Activated T-helper 1 cell treated with anti-CD3 and anti-CD28 coated beads, Interleukin-12 subunit alpha, Interleukin-12 subunit beta, Interleukin-2, Interleukin-4 antibody, amounts not matched to agents 30 ng/mL and 10 ng/mL and 1 ng/mL, durations not matched to agents 14 hours and 24 hours and 36 hours (primary cell): ENCODE measurements at regions of chr7 and their contacts with region 1.

Region 1: GRCh38 chr7:33062782-33063443 is 337 bp upstream of the NT5C3A start:
- DNase-seq: peak; percentile 88
- H3K4me3 Mint-ChIP-seq: peak overlapping the region; percentile 97
- H3K27ac Mint-ChIP-seq: peak overlapping the region; percentile 96
- H3K4me1 Mint-ChIP-seq: peaks cover 38% of the 10 kb centered on the region
- H3K27me3 Mint-ChIP-seq: peaks cover 9% of the 10 kb centered on the region

Region 2: DNA sequence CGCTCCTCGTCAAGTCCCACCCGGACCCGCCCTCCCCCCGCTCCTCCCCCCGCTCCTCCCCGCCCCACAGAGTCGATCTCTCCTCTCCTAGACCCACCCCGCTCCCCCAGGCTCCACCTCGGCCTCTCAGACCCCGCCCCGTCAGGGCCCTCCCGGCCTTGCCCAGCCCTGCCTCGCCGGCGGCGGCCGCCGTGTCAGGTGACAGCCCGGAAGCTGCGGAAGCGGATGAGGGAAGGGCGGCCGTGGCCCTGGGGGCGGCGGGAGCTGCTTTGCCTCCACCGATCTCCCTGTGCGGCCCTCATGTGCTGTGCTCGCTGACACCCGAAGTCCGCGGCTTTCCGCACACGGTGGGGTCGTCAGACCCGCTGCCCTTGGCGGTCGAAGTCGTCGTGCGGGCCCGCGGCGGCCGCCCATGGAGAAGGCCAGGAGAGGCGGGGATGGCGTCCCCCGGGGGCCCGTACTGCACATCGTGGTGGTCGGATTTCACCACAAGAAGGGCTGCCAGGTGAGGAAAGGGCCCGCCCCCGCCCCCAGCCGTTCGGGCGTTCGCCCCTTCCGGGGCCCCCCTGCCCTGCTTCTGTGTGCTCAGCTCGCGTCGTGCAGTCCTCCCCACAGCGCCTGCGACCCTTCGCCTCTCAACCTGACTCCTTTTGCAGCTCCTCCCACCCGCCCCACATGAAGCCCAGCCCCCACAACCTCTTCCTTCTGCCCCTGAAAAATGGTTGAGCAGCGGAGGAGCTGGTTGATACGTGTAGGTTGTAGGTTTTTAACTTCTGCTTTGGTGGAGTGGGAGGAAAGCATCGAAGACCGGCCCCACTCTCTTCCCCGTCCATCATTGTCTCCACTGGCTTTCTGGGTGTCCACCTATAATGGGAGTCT is 567.4 kb before region 1 on chr7 and contains the start of gene AVL9:
- intact Hi-C with region 1: loop called (anchors 1 kb)
- DNase-seq: peak; percentile 99
- H3K4me3 Mint-ChIP-seq: peak within 1 kb of the TSS; percentile 93
- H3K27ac Mint-ChIP-seq: peak within 1 kb of the TSS; percentile 98
- H3K4me1 Mint-ChIP-seq: peaks cover 32% of the 10 kb centered on the region
- H3K27me3 Mint-ChIP-seq: no peaks in the 10 kb centered on the region
- total RNA-seq, gene AVL9: 46.7 and 50.6 TPM in 2 replicates

Region 3: GRCh38 chr7:32905175-32905662 is 157.7 kb before region 1 on chr7:
- intact Hi-C with region 1: loop called (anchors 1 kb)
- DNase-seq: peak; percentile 83
- H3K4me3 Mint-ChIP-seq: peak overlapping the region; percentile 80
- H3K27ac Mint-ChIP-seq: peak overlapping the region; percentile 97
- H3K4me1 Mint-ChIP-seq: peaks cover 14% of the 10 kb centered on the region
- H3K27me3 Mint-ChIP-seq: no peaks in the 10 kb centered on the region

Region 4: GRCh38 chr7:32916006-32916405 is 146.9 kb before region 1 on chr7:
- intact Hi-C with region 1: no loop called
- DNase-seq: no peak
- H3K4me3 Mint-ChIP-seq: no peak overlapping the region
- H3K27ac Mint-ChIP-seq: no peak overlapping the region
- H3K4me1 Mint-ChIP-seq: peaks cover 13% of the 10 kb centered on the region
- H3K27me3 Mint-ChIP-seq: no peaks in the 10 kb centered on the region

Region 5: DNA sequence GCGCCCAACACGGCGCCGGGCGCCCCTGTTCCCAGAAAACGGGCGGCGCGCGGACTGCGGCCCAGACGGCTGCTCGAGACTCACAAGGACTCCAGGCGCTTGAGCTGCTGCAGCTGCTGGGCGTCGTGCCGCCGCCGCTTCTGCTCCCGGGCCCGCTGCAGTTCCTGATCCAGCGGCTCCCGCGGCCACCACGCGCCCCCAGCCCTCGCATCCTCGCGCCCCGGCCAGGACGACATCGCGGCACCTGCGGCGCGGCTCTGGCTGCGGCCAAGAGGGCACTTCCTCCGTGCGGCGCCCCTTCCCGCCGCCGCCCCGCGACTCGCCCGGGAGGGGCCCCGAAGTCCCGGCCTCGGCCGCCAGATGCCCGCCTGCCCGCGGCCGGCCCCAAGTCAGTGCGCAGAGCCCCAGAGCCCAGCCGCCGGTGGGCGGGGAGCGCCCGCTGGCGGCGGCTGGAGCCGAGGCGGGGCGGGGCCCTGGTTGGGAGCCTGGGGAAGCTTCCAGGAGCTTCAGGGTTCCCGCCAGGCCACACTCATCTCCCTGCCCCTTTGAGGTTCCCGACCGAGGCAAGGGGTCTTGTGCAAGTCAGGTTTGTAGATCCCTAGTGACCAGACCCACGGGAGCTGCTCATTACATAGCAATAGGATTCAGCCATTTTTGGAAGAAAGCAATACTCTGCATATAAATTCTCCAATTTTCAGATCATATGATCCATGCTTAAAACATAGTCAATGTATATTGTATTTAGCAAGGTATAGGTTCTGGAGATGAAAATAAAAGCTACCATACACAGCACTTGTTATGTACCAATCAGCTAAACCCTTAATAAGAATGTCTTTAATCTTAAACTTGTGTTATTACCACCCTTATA is 119.9 kb before region 1 on chr7:
- intact Hi-C with region 1: loop called (anchors 1 kb)
- DNase-seq: peak; percentile 65
- H3K4me3 Mint-ChIP-seq: peak overlapping the region; percentile 91
- H3K27ac Mint-ChIP-seq: peak overlapping the region; percentile 76
- H3K4me1 Mint-ChIP-seq: peaks cover 29% of the 10 kb centered on the region
- H3K27me3 Mint-ChIP-seq: peaks cover 10% of the 10 kb centered on the region

Region 6: DNA sequence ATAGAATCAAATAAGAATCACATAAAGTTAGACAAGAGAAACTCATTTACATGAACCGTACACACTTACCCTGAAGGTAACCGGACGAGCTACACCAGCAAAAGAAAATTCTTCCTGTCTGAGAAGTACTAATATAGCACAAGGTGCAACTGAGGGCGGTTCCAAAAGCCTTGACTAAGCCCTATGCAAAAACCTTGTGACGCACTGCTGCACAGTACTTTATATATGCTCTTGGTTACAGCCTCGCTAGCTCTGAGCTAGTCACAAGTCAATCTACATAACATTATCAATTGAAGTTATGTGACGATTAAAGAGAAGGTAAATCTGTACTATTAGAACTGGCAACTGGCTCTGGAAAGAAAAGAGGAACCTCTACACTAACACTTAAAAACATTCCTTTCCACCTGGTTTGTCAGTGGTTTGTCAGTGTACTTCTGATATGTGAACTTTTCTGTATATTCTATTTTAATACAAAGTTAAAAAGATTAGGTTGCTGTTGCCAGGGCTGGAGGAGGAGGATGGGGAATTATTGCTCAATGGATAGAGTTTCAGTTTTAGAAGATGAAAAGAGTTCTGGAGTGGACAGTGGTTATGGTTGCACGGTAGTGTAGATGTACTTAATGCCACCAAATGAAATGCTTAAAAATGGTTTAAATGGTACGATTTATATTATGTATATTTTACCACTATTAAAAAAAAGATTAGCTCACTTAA is 22.0 kb before region 1 on chr7:
- intact Hi-C with region 1: loop called (anchors 1 kb)
- DNase-seq: peak; percentile 67
- H3K4me3 Mint-ChIP-seq: peak overlapping the region; percentile 80
- H3K27ac Mint-ChIP-seq: peak overlapping the region; percentile 73
- H3K4me1 Mint-ChIP-seq: peaks cover 65% of the 10 kb centered on the region
- H3K27me3 Mint-ChIP-seq: no peaks in the 10 kb centered on the region

Region 7: DNA sequence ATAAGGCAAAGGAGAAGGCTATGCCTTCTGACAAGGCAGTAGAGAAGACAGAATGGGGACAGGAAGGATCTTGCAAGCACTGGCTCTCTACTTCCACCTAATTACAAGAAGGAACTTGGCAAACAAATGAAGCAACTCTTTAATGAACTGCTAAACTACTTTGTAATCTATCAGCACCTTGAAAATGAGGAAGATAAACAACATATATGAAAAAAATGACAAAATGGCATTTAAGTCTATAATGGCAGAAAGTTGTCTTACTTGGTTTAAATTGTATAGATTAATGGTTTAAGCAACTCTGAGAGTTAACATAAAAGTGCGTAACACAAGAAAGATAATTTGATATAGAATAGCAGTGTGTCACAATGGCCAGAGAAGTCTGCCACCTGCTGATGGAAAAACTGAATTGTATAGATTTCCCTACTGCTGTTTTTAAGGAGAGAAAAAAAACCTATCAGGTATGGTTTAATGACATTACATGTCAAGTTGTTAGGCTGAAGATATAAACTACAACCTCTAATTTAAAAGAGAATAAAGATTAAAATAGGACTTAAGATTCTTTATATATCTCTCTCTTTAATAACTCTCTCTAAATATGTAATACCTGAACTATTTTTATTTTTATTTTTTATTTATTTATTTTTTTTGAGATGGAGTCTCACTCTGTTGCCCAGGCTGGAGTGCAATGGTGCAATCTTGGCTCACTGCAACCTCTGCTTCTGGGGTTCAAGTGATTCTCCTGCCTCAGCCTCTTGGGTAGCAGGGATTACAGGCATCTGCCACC is 12.2 kb before region 1 on chr7:
- intact Hi-C with region 1: loop called (anchors 1 kb)
- DNase-seq: no peak
- H3K4me3 Mint-ChIP-seq: no peak overlapping the region
- H3K27ac Mint-ChIP-seq: peak overlapping the region; percentile 12
- H3K4me1 Mint-ChIP-seq: peaks cover 40% of the 10 kb centered on the region
- H3K27me3 Mint-ChIP-seq: no peaks in the 10 kb centered on the region

Region 8: DNA sequence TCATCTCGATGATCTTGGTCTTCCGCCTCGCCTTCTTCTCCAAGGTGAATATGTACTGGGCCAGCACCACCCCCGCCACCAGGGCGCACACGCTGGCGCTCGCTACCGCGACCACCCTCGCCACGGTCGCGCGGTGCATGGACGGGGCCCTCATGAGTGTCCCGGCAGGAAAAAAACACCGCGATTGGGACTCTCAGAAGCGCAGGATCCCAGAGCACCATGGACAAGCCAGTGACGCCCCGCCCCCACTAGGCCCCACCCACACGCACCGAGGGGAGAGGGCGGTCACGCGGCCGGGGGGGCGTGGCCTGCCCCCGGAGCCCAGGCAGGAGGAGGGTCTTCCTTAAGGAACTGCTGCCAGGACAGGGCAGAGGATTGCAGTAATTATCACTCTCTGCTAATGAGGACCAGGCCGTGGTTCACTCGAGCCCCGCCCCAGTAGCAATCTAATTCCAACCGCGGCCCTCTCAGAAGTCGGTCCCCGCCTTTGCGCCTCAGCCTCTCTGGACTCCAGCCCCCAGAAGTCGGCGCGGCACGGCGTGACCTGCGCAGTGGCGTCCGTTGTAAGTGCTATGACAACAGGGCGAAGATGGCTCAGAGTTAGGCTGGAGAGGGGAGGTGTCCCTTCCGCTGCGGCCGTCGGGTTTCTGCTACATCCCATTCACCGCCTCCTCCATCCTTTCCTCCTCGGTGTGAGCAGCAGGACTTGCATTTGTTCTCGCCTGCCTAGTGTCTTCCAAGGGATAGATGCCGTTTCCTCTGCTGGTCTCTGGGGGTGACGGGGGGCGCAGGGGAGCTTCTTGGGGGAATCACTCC is 66.3 kb after region 1 on chr7 and contains the start of gene BBS9:
- intact Hi-C with region 1: loop called (anchors 1 kb)
- DNase-seq: peak; percentile 88
- H3K4me3 Mint-ChIP-seq: peak within 1 kb of the TSS; percentile 94
- H3K27ac Mint-ChIP-seq: peak within 1 kb of the TSS; percentile 87
- H3K4me1 Mint-ChIP-seq: peaks cover 20% of the 10 kb centered on the region
- H3K27me3 Mint-ChIP-seq: peaks cover 5% of the 10 kb centered on the region
- total RNA-seq, gene BBS9: 3.8 and 6.3 TPM in 2 replicates